ENCODE measurements at regions of chr19 and their contacts with region 1.

Region 1: DNA sequence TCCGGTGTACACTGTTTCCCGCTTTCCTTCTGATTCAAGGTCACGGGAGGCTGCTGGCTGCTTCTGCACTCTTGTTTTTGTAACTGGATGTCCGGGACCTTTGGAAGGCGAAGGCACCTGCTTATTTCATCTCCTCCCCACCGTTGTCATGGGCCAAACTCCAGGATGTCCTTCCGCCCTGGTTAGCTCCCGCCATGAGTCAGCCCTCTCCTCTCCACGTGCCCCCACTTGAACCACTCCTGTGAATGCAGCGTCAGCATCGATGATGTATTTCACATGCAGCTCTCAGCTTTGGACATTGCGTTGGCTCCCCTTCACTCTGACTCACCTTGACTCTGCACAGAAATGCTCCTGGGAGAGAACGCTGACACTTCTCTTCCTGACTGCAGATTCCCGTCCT is 5.5 kb upstream of the GALP start:
- DNase-seq: no peak
- ATAC-seq: no peak
- H3K4me3 ChIP-seq: no peak overlapping the region
- H3K4me3 Mint-ChIP-seq: no peak overlapping the region
- H3K27ac ChIP-seq: no peak overlapping the region
- H3K27ac Mint-ChIP-seq: peak overlapping the region in 1 of 9 donors; percentile 34
- H3K4me1 ChIP-seq: no peaks in the 10 kb centered on the region
- H3K4me1 Mint-ChIP-seq: peaks cover 0 to 2% (median 0%) of the 10 kb centered on the region in 7 donors
- H3K27me3 ChIP-seq: no peaks in the 10 kb centered on the region
- H3K27me3 Mint-ChIP-seq: peaks cover 0 to 20% (median 5%) of the 10 kb centered on the region in 5 donors

Region 2: GRCh38 chr19:56066152-56067023 is 103.9 kb before region 1 on chr19:
- CTCF ChIA-PET with region 1: interaction called, 11 read pairs
- POLR2A ChIA-PET with region 1: no interaction called
- intact Hi-C with region 1: loop called (anchors 1 to 2 kb)
- DNase-seq: peak; percentile 38 to 67 (median 58)
- ATAC-seq: peak; percentile 74
- H3K4me3 ChIP-seq: peak overlapping the region; percentile 38
- H3K4me3 Mint-ChIP-seq: peak overlapping the region; percentile 44 to 80 (median 74)
- H3K27ac ChIP-seq: no peak overlapping the region
- H3K27ac Mint-ChIP-seq: peak overlapping the region in 1 of 9 donors; percentile 17
- H3K4me1 ChIP-seq: no peaks in the 10 kb centered on the region
- H3K4me1 Mint-ChIP-seq: peaks cover 4 to 14% (median 12%) of the 10 kb centered on the region in 7 donors
- H3K27me3 ChIP-seq: no peaks in the 10 kb centered on the region
- H3K27me3 Mint-ChIP-seq: peaks cover 0 to 45% (median 38%) of the 10 kb centered on the region in 5 donors

Region 3: GRCh38 chr19:56080669-56081401 is 89.4 kb before region 1 on chr19:
- CTCF ChIA-PET with region 1: interaction called, 3 read pairs
- POLR2A ChIA-PET with region 1: no interaction called
- intact Hi-C with region 1: loop called (anchors 1 kb)
- DNase-seq: peak; percentile 22 to 69 (median 47)
- ATAC-seq: peak; percentile 81
- H3K4me3 ChIP-seq: peak overlapping the region; percentile 58
- H3K4me3 Mint-ChIP-seq: peak overlapping the region; percentile 70 to 89 (median 80)
- H3K27ac ChIP-seq: no peak overlapping the region
- H3K27ac Mint-ChIP-seq: peak overlapping the region in 1 of 9 donors; percentile 31
- H3K4me1 ChIP-seq: peaks cover 7 to 8% of the 10 kb centered on the region in 2 donors
- H3K4me1 Mint-ChIP-seq: peaks cover 8 to 11% (median 11%) of the 10 kb centered on the region in 7 donors
- H3K27me3 ChIP-seq: no peaks in the 10 kb centered on the region
- H3K27me3 Mint-ChIP-seq: peaks cover 4 to 13% (median 10%) of the 10 kb centered on the region in 5 donors

Region 4: DNA sequence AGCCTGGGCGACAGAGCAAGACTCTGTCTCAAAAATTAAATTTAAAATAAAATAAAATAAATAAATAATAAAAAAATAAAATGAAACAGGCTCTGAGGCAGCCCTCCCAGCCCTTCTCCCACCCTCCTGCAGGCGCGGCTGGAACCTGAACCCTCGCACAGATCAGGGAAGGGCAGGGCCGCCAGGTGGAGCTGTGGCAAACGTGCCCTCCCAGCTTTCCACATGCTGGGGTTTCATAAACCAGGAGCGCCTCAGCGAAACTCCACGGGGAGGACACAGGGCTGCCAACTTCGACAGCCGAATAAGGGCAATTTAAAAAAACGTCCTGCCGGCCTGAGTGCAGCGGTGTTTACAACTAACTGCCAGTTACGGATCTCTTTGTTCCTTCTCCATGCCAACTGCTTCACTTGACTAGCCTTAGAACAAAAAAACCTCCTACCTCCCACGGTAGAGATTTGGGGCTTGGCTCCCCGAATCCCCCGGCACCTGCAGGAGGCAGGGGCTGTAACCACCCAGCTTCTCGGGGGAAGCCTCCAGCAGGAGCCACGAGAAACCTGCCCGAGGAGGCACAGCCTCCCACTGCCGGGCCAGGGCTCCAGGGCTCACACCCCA is 65.1 kb before region 1 on chr19:
- CTCF ChIA-PET with region 1: interaction called, 5 read pairs
- POLR2A ChIA-PET with region 1: no interaction called
- intact Hi-C with region 1: loop called (anchors 1 kb)
- DNase-seq: peak; percentile 39 to 68 (median 55)
- ATAC-seq: peak; percentile 83
- H3K4me3 ChIP-seq: no peak overlapping the region
- H3K4me3 Mint-ChIP-seq: peak overlapping the region in 8 of 10 donors; percentile 26 to 71 (median 60)
- H3K27ac ChIP-seq: no peak overlapping the region
- H3K27ac Mint-ChIP-seq: peak overlapping the region in 4 of 9 donors; percentile 9 to 70 (median 62)
- H3K4me1 ChIP-seq: peaks cover 0 to 5% of the 10 kb centered on the region in 2 donors
- H3K4me1 Mint-ChIP-seq: peaks cover 22 to 49% (median 36%) of the 10 kb centered on the region in 7 donors
- H3K27me3 ChIP-seq: no peaks in the 10 kb centered on the region
- H3K27me3 Mint-ChIP-seq: no peaks in the 10 kb centered on the region

Region 5: DNA sequence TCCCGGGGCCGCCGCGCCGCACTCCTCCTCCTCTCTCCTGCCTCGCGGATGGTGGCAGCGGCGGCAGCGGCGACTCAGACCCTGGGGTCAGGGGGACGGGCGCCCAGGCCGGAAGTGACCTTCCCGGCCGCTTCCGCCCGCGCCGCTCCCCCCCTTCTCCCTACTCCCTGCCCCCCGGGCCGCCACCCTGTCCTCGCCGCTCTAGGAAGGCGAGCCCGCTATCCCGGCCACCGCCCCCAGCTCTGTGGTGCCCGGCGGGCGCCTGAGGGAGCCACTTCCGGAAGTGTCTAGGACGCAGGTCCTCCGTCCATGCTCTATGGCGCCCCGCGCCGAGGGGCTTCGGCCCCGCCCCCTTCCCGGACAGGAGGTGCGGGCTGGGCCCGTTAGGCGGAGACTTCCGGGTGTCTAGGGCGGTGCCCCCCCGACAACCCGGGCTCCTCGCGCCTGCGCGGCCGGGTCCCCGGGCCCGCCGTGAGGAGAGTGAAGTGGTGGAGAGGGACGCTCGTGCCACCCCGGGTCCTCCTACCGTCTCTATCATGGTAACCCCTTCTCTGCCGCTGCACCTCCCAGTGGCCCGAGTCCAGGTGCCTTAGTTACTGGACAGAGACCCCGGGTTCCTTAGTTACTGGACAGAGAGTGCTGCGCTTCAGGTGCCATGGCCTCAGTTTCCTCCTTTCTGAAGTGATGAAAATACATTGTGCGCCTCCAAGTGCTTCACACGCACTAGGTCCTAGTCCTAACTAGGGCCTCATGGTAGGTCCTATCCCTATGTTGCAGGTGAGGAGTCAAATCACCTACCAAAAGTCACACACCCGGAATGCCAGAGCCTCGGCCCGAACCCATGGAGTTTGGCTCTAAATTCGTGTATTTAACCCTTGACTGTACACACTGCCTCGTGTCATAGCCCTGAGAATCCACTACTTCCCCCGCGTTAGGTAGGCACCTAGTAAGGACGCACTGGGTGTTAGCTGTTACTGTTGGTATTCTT is 48.8 kb before region 1 on chr19 and contains the start of gene ZNF787:
- CTCF ChIA-PET with region 1: no interaction called
- POLR2A ChIA-PET with region 1: interaction called, 3 read pairs
- intact Hi-C with region 1: loop called in 1 of 2 experiments (anchors 5 kb)
- DNase-seq: peak; percentile 94 to 98 (median 98)
- ATAC-seq: peak; percentile 88
- H3K4me3 ChIP-seq: peak within 1 kb of the TSS; percentile 79
- H3K4me3 Mint-ChIP-seq: peak within 1 kb of the TSS; percentile 85 to 93 (median 88)
- H3K27ac ChIP-seq: peak within 1 kb of the TSS; percentile 97
- H3K27ac Mint-ChIP-seq: peak within 1 kb of the TSS; percentile 87 to 98 (median 95)
- H3K4me1 ChIP-seq: peaks cover 8 to 34% of the 10 kb centered on the region in 2 donors
- H3K4me1 Mint-ChIP-seq: peaks cover 17 to 72% (median 58%) of the 10 kb centered on the region in 7 donors
- H3K27me3 ChIP-seq: no peaks in the 10 kb centered on the region
- H3K27me3 Mint-ChIP-seq: no peaks in the 10 kb centered on the region
- total RNA-seq, gene ZNF787: 19.7 to 41.2 (median 33.0) TPM

Region 6: GRCh38 chr19:56155124-56155687 is 15.1 kb before region 1 on chr19:
- CTCF ChIA-PET with region 1: no interaction called
- POLR2A ChIA-PET with region 1: no interaction called
- intact Hi-C with region 1: no loop called
- DNase-seq: no peak
- ATAC-seq: no peak
- H3K4me3 ChIP-seq: no peak overlapping the region
- H3K4me3 Mint-ChIP-seq: no peak overlapping the region
- H3K27ac ChIP-seq: no peak overlapping the region
- H3K27ac Mint-ChIP-seq: peak overlapping the region in 1 of 9 donors; percentile 17
- H3K4me1 ChIP-seq: no peaks in the 10 kb centered on the region
- H3K4me1 Mint-ChIP-seq: peaks cover 5 to 23% (median 20%) of the 10 kb centered on the region in 7 donors
- H3K27me3 ChIP-seq: no peaks in the 10 kb centered on the region
- H3K27me3 Mint-ChIP-seq: no peaks in the 10 kb centered on the region

Region 7: GRCh38 chr19:56222901-56223300 is 52.6 kb after region 1 on chr19:
- CTCF ChIA-PET with region 1: no interaction called
- POLR2A ChIA-PET with region 1: no interaction called
- intact Hi-C with region 1: no loop called
- DNase-seq: no peak
- ATAC-seq: no peak
- H3K4me3 ChIP-seq: no peak overlapping the region
- H3K4me3 Mint-ChIP-seq: no peak overlapping the region
- H3K27ac ChIP-seq: no peak overlapping the region
- H3K27ac Mint-ChIP-seq: no peak overlapping the region
- H3K4me1 ChIP-seq: no peaks in the 10 kb centered on the region
- H3K4me1 Mint-ChIP-seq: peaks cover 0 to 5% (median 2%) of the 10 kb centered on the region in 7 donors
- H3K27me3 ChIP-seq: no peaks in the 10 kb centered on the region
- H3K27me3 Mint-ChIP-seq: peaks cover 3 to 10% (median 5%) of the 10 kb centered on the region in 5 donors

Region 8: DNA sequence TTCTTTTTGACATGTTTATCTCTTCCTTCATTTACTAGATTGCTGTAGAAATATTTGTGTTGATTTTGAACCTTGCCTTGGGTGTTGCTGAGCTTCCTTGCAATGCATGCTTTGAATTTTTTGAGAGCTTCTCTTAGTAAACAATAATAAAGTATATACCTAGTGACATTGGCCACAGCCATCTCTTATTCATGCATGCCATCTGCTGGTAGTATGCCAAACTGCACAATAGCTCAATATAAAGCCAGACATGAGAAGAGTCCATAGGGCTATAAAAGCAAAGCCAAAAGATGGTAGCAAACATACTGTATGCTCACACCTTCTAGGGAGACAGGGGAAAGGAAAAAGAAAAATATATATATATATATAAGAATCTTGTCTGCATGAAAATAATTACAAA is 163.2 kb after region 1 on chr19:
- CTCF ChIA-PET with region 1: no interaction called
- POLR2A ChIA-PET with region 1: no interaction called
- intact Hi-C with region 1: loop called in 1 of 2 experiments (anchors 2 kb)
- DNase-seq: peak in 5 of 9 donors; percentile 13 to 43 (median 32)
- ATAC-seq: peak; percentile 76
- H3K4me3 ChIP-seq: no peak overlapping the region
- H3K4me3 Mint-ChIP-seq: no peak overlapping the region
- H3K27ac ChIP-seq: no peak overlapping the region
- H3K27ac Mint-ChIP-seq: no peak overlapping the region
- H3K4me1 ChIP-seq: no peaks in the 10 kb centered on the region
- H3K4me1 Mint-ChIP-seq: no peaks in the 10 kb centered on the region
- H3K27me3 ChIP-seq: no peaks in the 10 kb centered on the region
- H3K27me3 Mint-ChIP-seq: peaks cover 0 to 9% (median 4%) of the 10 kb centered on the region in 5 donors

Measured in naive thymus-derived CD4-positive, alpha-beta T cell (primary cell).